ENCODE measurements at regions of chr7 and their contacts with region 1.

Region 1: GRCh38 chr7:142469696-142470543 is 212.1 kb upstream of the PRSS58 start:
- DNase-seq: no peak
- H3K4me3 ChIP-seq: no peak overlapping the region
- H3K27ac ChIP-seq: no peak overlapping the region
- H3K4me1 ChIP-seq: no peaks in the 10 kb centered on the region
- H3K27me3 ChIP-seq: no peaks in the 10 kb centered on the region
- CTCF ChIP-seq: no peak

Region 2: DNA sequence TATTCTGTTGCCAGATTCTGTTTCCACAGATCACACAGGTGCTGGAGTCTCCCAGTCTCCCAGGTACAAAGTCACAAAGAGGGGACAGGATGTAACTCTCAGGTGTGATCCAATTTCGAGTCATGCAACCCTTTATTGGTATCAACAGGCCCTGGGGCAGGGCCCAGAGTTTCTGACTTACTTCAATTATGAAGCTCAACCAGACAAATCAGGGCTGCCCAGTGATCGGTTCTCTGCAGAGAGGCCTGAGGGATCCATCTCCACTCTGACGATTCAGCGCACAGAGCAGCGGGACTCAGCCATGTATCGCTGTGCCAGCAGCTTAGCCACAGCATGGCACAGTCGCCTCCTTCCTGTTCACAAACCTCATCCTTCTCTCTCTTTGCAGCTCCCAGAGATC is 41.9 kb after region 1 on chr7:
- CTCF ChIA-PET with region 1: no interaction called
- POLR2A ChIA-PET with region 1: no interaction called
- intact Hi-C with region 1: loop called (anchors 5 kb)
- DNase-seq: no peak
- H3K4me3 ChIP-seq: no peak overlapping the region
- H3K27ac ChIP-seq: no peak overlapping the region
- H3K4me1 ChIP-seq: no peaks in the 10 kb centered on the region
- H3K27me3 ChIP-seq: peaks cover 19% of the 10 kb centered on the region
- CTCF ChIP-seq: no peak

Measured in A673 (cell line).